Posterior vena cava (tissue), 2 donors: ENCODE measurements at regions of chr1 and their contacts with region 1.

Region 1: DNA sequence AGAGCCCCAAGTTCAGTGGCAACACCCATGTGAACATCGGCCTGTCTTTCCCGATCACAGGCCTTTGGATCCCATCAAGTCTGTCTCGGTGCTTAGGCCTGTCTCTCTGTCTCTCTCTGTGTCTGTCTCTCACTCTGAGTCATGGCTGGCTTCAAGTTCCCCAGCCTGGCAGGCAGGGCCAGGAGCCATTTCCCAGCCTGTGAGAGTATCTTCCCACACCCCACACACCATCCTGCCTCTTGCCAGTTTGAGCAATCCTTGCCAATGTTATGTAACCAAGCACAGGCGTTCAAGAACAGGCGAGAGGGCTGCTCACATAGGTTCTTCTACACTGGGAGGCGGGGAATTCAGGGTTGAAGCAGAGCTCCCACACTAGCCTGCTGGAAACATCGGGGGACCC is 70.0 kb upstream of the TMEM51 start:
- DNase-seq: no peak

Region 2: DNA sequence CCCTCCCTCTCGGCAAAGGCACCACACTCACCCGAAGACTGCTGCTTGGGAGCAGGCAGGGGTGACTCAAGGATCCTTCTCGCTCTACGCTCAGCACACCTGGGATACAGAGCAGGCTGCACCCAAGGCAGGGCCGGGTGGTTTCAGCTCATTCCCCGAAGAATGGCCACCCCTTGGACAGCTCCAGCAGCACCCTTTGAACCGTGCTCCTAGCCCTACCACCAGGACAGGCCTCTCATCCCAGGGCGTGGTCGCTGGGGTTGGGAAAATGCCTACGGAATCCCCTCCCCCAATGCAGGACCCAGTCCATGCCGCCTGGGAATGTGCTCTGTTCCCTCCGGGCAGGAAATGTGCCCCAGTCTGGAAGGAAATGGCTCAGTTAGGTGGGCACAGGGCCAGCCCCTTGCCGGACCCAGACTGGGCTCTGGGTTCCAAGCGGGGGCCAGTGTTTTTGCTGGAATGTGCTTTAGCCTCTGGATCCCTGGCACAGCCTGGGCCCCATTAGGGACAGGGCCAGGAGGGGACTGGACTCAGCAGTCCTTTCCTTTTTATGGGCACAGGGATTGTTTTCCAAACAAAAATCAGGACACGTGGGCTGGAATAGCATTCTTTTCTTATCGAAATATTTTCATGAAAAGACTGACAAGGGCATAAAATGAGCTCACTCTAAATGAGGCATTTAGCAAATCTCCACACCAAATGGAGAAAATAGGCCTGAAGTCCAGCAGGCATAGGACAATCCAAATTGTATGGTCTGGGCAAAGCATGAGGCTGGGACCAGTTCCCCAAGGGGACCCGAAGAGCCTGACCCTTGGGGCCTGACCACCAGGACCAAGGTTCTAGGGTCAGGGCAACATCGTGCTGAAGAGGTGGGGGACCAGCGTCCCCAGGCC is 666.1 kb after region 1 on chr1:
- intact Hi-C with region 1: loop called in 1 of 2 experiments (anchors 5 kb)
- DNase-seq: peak; percentile 91